Panc1 (cell line): ENCODE measurements at regions of chr7 and their contacts with region 1.

Region 1: GRCh38 chr7:128827971-128828711 is 2.1 kb upstream of the FLNC start:
- DNase-seq: peak; percentile 64
- ATAC-seq: peak; percentile 28
- H3K4me3 ChIP-seq: no peak overlapping the region
- H3K27ac ChIP-seq: no peak overlapping the region
- H3K4me1 ChIP-seq: peaks cover 23% of the 10 kb centered on the region
- H3K27me3 ChIP-seq: no peaks in the 10 kb centered on the region
- CTCF ChIP-seq: no peak

Region 2: DNA sequence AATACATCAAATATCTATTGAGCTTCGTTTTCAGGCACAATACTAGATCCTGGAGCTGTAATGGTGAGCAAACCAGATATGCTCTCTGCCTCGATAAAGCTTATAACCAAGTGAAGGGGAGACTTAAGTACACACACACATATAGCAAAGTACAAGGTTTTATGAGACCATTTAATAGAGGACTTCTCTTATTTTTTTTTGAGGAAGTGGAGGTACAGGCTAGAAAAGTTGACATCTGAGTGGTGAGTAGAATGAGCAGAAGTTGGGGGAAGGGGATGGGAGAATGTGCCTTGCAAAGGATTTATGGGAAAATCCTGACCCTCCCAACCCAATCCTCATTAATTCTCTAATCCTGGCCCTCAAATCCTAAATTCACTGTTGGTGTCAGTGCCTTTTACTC is 28.7 kb before region 1 on chr7:
- CTCF ChIA-PET with region 1: no interaction called
- POLR2A ChIA-PET with region 1: interaction called, 12 read pairs
- in situ Hi-C with region 1: no loop called
- intact Hi-C with region 1: no loop called
- DNase-seq: no peak
- ATAC-seq: no peak
- H3K4me3 ChIP-seq: no peak overlapping the region
- H3K27ac ChIP-seq: no peak overlapping the region
- H3K4me1 ChIP-seq: no peaks in the 10 kb centered on the region
- H3K27me3 ChIP-seq: 0 out of 2 replicates have a peak, but pooled peaks cover 2% of the 10 kb centered on the region
- CTCF ChIP-seq: no peak

Region 3: GRCh38 chr7:129072479-129073011 is 244.4 kb after region 1 on chr7:
- CTCF ChIA-PET with region 1: no interaction called
- POLR2A ChIA-PET with region 1: no interaction called
- in situ Hi-C with region 1: no loop called
- intact Hi-C with region 1: no loop called
- DNase-seq: no peak
- ATAC-seq: no peak
- H3K4me3 ChIP-seq: no peak overlapping the region
- H3K27ac ChIP-seq: no peak overlapping the region
- H3K4me1 ChIP-seq: no peaks in the 10 kb centered on the region
- H3K27me3 ChIP-seq: no peaks in the 10 kb centered on the region; the same call in 1 of the 2 replicates
- CTCF ChIP-seq: no peak